A549 (cell line): ENCODE measurements at regions of chr11 and their contacts with region 1.

Region 1: GRCh38 chr11:118689851-118690552 is 10.6 kb upstream of the TREH start:
- DNase-seq: peak; percentile 79 to 93
- ATAC-seq: peak; percentile 96
- H3K4me3 ChIP-seq: peak overlapping the region; percentile 34
- H3K27ac ChIP-seq: peak overlapping the region; percentile 91 to 99
- H3K4me1 ChIP-seq: peaks cover 11% of the 10 kb centered on the region; the same call in 1 of the 3 replicates
- CTCF ChIP-seq: peak; percentile 86
- EP300 ChIP-seq: no peak
- POLR2A ChIP-seq: no peak
- RAD21 ChIP-seq: peak; percentile 74 to 78

Region 2: GRCh38 chr11:118679483-118679882 is 10.5 kb before region 1 on chr11 and contains the start of gene TREH:
- CTCF ChIA-PET with region 1: interaction called, 14 read pairs
- POLR2A ChIA-PET with region 1: interaction called, 6 read pairs
- DNase-seq: no peak
- ATAC-seq: no peak
- H3K4me3 ChIP-seq: no peak within 1 kb of the TSS
- H3K27ac ChIP-seq: no peak within 1 kb of the TSS
- H3K4me1 ChIP-seq: peaks cover 3% of the 10 kb centered on the region; the same call in 1 of the 3 replicates
- CTCF ChIP-seq: no peak
- EP300 ChIP-seq: no peak
- POLR2A ChIP-seq: no peak
- RAD21 ChIP-seq: no peak
- polyA plus RNA-seq, gene TREH: not detected in 2 replicates

Region 3: GRCh38 chr11:118715245-118715831 is 25.3 kb after region 1 on chr11:
- CTCF ChIA-PET with region 1: interaction called, 11 read pairs
- POLR2A ChIA-PET with region 1: no interaction called
- DNase-seq: no peak
- ATAC-seq: no peak
- H3K4me3 ChIP-seq: no peak overlapping the region
- H3K27ac ChIP-seq: no peak overlapping the region
- H3K4me1 ChIP-seq: peaks cover 3% of the 10 kb centered on the region; the same call in 1 of the 3 replicates
- CTCF ChIP-seq: no peak
- EP300 ChIP-seq: no peak
- POLR2A ChIP-seq: no peak
- RAD21 ChIP-seq: no peak

Region 4: GRCh38 chr11:118797510-118797909 is 107.5 kb after region 1 on chr11:
- CTCF ChIA-PET with region 1: interaction called, 12 read pairs
- POLR2A ChIA-PET with region 1: no interaction called
- DNase-seq: no peak
- ATAC-seq: no peak
- H3K4me3 ChIP-seq: no peak overlapping the region
- H3K27ac ChIP-seq: no peak overlapping the region
- H3K4me1 ChIP-seq: peaks cover 8% of the 10 kb centered on the region
- CTCF ChIP-seq: no peak
- EP300 ChIP-seq: no peak
- POLR2A ChIP-seq: no peak
- RAD21 ChIP-seq: no peak

Region 5: DNA sequence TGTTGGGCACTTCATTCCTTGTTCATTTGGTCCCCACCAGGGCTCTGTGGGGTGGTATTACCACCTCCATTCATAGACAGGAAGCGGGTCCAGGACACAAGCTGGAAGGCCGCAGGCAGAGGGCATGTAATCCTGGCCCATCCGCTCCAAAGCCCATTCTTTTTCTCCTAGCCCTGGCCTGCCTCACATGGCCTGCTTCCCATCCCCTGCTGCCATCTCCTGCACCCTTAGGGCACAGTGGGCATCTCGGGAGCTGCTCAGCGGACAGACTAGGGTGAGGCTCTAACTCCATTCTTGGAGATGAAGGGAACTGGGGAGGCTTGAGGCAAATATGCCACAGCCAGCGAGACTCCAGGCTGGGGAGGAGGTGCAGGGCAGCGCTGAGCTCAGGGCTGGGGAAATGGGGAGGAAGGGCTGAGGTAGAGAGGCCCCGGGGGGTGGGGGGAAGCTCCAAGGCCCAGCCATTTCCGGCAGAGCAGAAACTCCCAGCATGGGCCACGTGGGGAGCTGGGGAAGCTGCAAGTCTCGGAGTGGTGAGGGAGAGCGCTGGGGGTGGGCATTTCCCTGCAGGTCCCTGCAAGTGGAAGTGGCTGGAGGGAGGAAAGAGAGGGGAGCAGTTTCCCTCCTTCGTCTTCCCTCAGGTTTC is 250.1 kb after region 1 on chr11:
- CTCF ChIA-PET with region 1: interaction called, 11 read pairs
- POLR2A ChIA-PET with region 1: no interaction called
- DNase-seq: no peak
- ATAC-seq: peak; percentile 43 to 58; a peak in 5 of 6 replicates
- H3K4me3 ChIP-seq: no peak overlapping the region
- H3K27ac ChIP-seq: peak overlapping the region in 1 of 2 experiments; percentile 33; a peak in 1 of 6 replicates
- H3K4me1 ChIP-seq: peaks cover 10% of the 10 kb centered on the region
- CTCF ChIP-seq: no peak
- EP300 ChIP-seq: no peak
- POLR2A ChIP-seq: no peak
- RAD21 ChIP-seq: no peak